ENCODE measurements at regions of chr11 and their contacts with region 1.

Region 1: DNA sequence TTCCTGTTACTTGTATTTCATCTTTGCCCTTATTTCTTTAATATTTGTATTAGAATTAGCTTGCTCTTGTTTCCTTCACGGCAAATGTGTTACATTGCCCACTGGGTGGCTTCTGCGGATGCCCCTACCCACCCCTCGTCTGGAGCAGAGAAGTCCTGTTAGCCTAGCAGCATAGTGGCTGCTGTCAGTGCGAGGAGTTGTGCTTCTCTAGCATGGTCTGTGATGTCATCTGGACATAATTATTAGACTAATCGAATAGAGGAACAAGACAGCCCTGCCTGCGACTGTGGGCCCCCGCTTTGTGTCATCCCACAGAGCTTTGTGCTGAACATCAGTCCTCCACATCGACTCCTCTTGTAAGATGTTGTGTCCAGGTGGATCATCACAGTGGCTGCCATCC is 74.5 kb downstream of the PPP6R3 start:
- DNase-seq: no peak
- H3K4me3 ChIP-seq: no peak overlapping the region
- H3K4me3 Mint-ChIP-seq: no peak overlapping the region
- H3K27ac ChIP-seq: no peak overlapping the region
- H3K27ac Mint-ChIP-seq: peak overlapping the region in 3 of 8 donors; percentile 6 to 17 (median 15)
- H3K4me1 ChIP-seq: no peaks in the 10 kb centered on the region
- H3K4me1 Mint-ChIP-seq: peaks cover 68 to 89% (median 77%) of the 10 kb centered on the region in 3 donors
- H3K27me3 ChIP-seq: no peaks in the 10 kb centered on the region
- H3K27me3 Mint-ChIP-seq: no peaks in the 10 kb centered on the region

Region 2: DNA sequence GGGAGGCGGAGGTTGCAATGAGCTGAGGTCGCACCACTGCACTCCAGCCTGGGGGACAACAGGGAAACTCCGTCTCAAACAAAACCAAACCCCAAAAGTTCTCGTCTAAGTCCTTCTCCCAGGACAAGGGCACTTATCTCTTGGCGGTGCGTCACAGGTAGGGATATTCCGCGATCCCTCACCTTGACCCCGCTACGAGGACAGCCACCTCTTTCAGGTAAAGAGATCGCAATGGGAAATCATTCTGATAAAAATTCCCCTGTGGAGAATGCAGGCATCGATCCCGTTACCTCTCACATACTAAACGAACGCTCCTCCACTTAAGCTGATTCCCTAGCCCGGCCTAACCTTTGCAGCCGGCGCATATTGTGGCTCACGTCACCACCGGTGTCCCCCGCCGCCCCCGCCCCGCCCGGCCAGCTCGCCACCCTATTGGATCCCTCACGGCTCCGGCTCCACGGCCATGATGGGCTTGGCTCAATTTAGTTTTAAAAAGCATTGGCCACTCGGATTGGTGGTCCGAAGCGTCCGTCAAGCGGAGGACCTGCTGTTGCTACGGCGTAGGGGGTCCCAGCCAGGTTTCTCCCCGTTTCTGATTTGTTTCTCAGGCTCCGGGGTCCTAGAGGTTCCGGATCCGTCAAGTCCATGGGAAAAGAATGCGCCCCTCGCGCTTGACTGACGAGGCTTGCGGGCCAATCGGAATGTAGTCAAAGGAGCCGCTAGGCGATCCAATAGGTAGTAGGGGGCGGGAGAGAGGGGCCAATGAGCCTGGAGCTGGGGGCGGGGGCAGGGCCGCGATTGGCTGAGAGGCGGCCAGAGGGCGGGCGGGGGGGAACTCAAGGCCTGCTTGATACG is 75.0 kb before region 1 on chr11:
- CTCF ChIA-PET with region 1: no interaction called
- POLR2A ChIA-PET with region 1: interaction called, 13 read pairs
- DNase-seq: peak; percentile 92 to 96 (median 95)
- H3K4me3 ChIP-seq: peak overlapping the region; percentile 79
- H3K4me3 Mint-ChIP-seq: peak overlapping the region; percentile 95 to 99 (median 97)
- H3K27ac ChIP-seq: peak overlapping the region; percentile 95
- H3K27ac Mint-ChIP-seq: peak overlapping the region; percentile 97 to 99 (median 98)
- H3K4me1 ChIP-seq: peaks cover 34% of the 10 kb centered on the region
- H3K4me1 Mint-ChIP-seq: peaks cover 33 to 46% (median 41%) of the 10 kb centered on the region in 3 donors
- H3K27me3 ChIP-seq: no peaks in the 10 kb centered on the region
- H3K27me3 Mint-ChIP-seq: peaks cover 2 to 3% of the 10 kb centered on the region in 2 donors